ENCODE measurements at regions of chr1 and their contacts with region 1.

Region 1: GRCh38 chr1:198771563-198772153 is 132.8 kb downstream of the PTPRC start:
- DNase-seq: no peak
- H3K4me3 ChIP-seq: no peak overlapping the region
- H3K27ac ChIP-seq: no peak overlapping the region
- H3K4me1 ChIP-seq: no peaks in the 10 kb centered on the region
- H3K27me3 ChIP-seq: no peaks in the 10 kb centered on the region
- CTCF ChIP-seq: peak; percentile 66

Region 2: GRCh38 chr1:198472113-198472512 is 299.5 kb before region 1 on chr1:
- CTCF ChIA-PET with region 1: no interaction called
- POLR2A ChIA-PET with region 1: no interaction called
- intact Hi-C with region 1: no loop called
- DNase-seq: no peak
- H3K4me3 ChIP-seq: no peak overlapping the region
- H3K27ac ChIP-seq: no peak overlapping the region
- H3K4me1 ChIP-seq: no peaks in the 10 kb centered on the region
- H3K27me3 ChIP-seq: no peaks in the 10 kb centered on the region
- CTCF ChIP-seq: no peak

Region 3: GRCh38 chr1:198726455-198726854 is 45.2 kb before region 1 on chr1:
- CTCF ChIA-PET with region 1: no interaction called
- POLR2A ChIA-PET with region 1: no interaction called
- intact Hi-C with region 1: no loop called
- DNase-seq: no peak
- H3K4me3 ChIP-seq: no peak overlapping the region
- H3K27ac ChIP-seq: no peak overlapping the region
- H3K4me1 ChIP-seq: no peaks in the 10 kb centered on the region
- H3K27me3 ChIP-seq: no peaks in the 10 kb centered on the region
- CTCF ChIP-seq: no peak

Region 4: DNA sequence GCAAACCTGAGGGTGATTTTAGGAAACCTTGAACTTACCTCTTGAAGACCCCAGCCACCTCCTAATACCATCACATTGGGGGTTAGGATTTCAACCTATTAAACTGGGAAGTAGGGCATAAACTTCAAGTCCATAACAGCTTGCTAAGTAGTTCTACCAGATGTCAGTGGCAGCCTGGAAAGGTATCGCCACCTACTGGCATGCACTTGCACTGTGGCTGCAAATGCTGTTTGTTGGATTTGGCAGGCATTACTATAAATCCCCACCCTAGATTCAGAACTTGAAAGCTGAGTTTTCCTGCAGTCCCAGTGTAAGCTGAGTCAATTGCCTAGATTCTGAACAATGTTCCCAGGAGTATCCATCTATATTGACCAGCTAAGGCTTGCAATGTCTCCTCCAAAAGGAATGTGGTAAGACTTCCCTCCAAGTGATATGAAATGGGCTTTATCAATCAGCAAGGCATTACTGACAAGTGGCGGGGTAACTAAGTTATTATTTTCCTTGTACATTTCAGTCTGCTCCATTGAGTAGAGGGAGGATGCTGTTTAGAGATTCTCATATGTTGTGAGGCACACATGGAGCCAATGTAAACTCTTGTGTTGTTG is 341.7 kb after region 1 on chr1:
- CTCF ChIA-PET with region 1: no interaction called
- POLR2A ChIA-PET with region 1: no interaction called
- intact Hi-C with region 1: loop called (anchors 1 kb)
- DNase-seq: peak in 1 of 2 experiments; percentile 20
- H3K4me3 ChIP-seq: no peak overlapping the region
- H3K27ac ChIP-seq: no peak overlapping the region
- H3K4me1 ChIP-seq: no peaks in the 10 kb centered on the region
- H3K27me3 ChIP-seq: no peaks in the 10 kb centered on the region
- CTCF ChIP-seq: peak; percentile 70

Region 5: GRCh38 chr1:199422198-199422597 is 650.5 kb after region 1 on chr1:
- CTCF ChIA-PET with region 1: no interaction called
- POLR2A ChIA-PET with region 1: no interaction called
- intact Hi-C with region 1: loop called (anchors 2 kb)
- DNase-seq: peak in 1 of 2 experiments; percentile 3
- H3K4me3 ChIP-seq: no peak overlapping the region
- H3K27ac ChIP-seq: no peak overlapping the region
- H3K4me1 ChIP-seq: no peaks in the 10 kb centered on the region
- H3K27me3 ChIP-seq: no peaks in the 10 kb centered on the region
- CTCF ChIP-seq: peak; percentile 59

Region 6: DNA sequence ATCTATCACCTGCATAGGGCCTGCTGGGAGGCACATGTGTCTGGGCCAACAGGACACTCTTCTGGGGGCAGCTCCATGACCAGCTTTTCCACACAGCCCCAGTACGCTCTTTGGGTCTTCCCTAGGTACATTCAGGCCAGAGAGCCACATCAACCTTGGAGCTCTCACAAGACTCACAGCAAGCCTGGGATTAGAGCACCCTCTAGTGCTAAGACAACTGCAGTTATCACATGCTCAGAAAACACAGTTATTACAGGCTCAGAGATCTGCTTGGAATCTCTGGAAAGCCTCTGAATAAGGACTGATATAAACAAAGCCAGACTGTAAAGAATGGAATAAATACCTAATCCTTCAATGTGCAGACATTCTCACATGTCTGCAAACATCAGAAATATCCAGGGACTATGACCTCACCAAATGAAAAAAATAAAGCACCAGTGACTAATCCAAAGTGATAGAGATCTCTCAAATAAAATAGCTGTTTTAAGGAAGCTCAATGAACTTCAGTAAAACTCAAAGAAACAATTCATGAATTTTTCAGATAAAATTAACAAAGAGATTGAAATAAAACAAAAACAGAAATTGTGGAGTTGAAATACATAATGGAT is 692.0 kb after region 1 on chr1:
- CTCF ChIA-PET with region 1: no interaction called
- POLR2A ChIA-PET with region 1: no interaction called
- intact Hi-C with region 1: loop called (anchors 1 kb)
- DNase-seq: peak in 1 of 2 experiments; percentile 18
- H3K4me3 ChIP-seq: no peak overlapping the region
- H3K27ac ChIP-seq: no peak overlapping the region
- H3K4me1 ChIP-seq: no peaks in the 10 kb centered on the region
- H3K27me3 ChIP-seq: no peaks in the 10 kb centered on the region
- CTCF ChIP-seq: peak; percentile 72

Region 7: GRCh38 chr1:199551967-199552565 is 780.4 kb after region 1 on chr1:
- CTCF ChIA-PET with region 1: no interaction called
- POLR2A ChIA-PET with region 1: no interaction called
- intact Hi-C with region 1: loop called (anchors 1 kb)
- DNase-seq: peak; percentile 36 to 37
- H3K4me3 ChIP-seq: no peak overlapping the region
- H3K27ac ChIP-seq: no peak overlapping the region
- H3K4me1 ChIP-seq: no peaks in the 10 kb centered on the region
- H3K27me3 ChIP-seq: no peaks in the 10 kb centered on the region
- CTCF ChIP-seq: peak; percentile 87

Measured in PC-9 (cell line).